Activated B cell treated with CpG ODN at 0.5 μM for 24 hours (primary cell): ENCODE measurements at regions of chr6 and their contacts with region 1.

Region 1: GRCh38 chr6:90216072-90216977 is 80.3 kb downstream of the BACH2 start:
- DNase-seq: peak; percentile 52
- ATAC-seq: peak; percentile 80
- H3K4me3 Mint-ChIP-seq: peak overlapping the region; percentile 73
- H3K27ac Mint-ChIP-seq: no peak overlapping the region
- H3K4me1 Mint-ChIP-seq: peaks cover under 1% of the 10 kb centered on the region
- H3K27me3 Mint-ChIP-seq: no peaks in the 10 kb centered on the region
- CTCF ChIP-seq: no peak

Region 2: GRCh38 chr6:88695936-88696335 is 1520.4 kb before region 1 on chr6:
- CTCF ChIA-PET with region 1: no interaction called
- POLR2A ChIA-PET with region 1: no interaction called
- intact Hi-C with region 1: no loop called
- DNase-seq: no peak
- ATAC-seq: no peak
- H3K4me3 Mint-ChIP-seq: no peak overlapping the region
- H3K27ac Mint-ChIP-seq: no peak overlapping the region
- H3K4me1 Mint-ChIP-seq: peaks cover 10% of the 10 kb centered on the region
- H3K27me3 Mint-ChIP-seq: no peaks in the 10 kb centered on the region
- CTCF ChIP-seq: no peak

Region 3: GRCh38 chr6:89940225-89941027 is 275.9 kb before region 1 on chr6:
- CTCF ChIA-PET with region 1: interaction called, 58 read pairs
- POLR2A ChIA-PET with region 1: interaction called, 10 read pairs
- intact Hi-C with region 1: loop called (anchors 1 kb)
- DNase-seq: no peak
- ATAC-seq: peak; percentile 89
- H3K4me3 Mint-ChIP-seq: no peak overlapping the region
- H3K27ac Mint-ChIP-seq: peak overlapping the region; percentile 59
- H3K4me1 Mint-ChIP-seq: peaks cover 13% of the 10 kb centered on the region
- H3K27me3 Mint-ChIP-seq: no peaks in the 10 kb centered on the region
- CTCF ChIP-seq: peak; percentile 58

Region 4: GRCh38 chr6:90021711-90022110 is 194.6 kb before region 1 on chr6:
- CTCF ChIA-PET with region 1: no interaction called
- POLR2A ChIA-PET with region 1: no interaction called
- intact Hi-C with region 1: no loop called
- DNase-seq: no peak
- ATAC-seq: no peak
- H3K4me3 Mint-ChIP-seq: no peak overlapping the region
- H3K27ac Mint-ChIP-seq: no peak overlapping the region
- H3K4me1 Mint-ChIP-seq: peaks cover 54% of the 10 kb centered on the region
- H3K27me3 Mint-ChIP-seq: no peaks in the 10 kb centered on the region
- CTCF ChIP-seq: no peak

Region 5: GRCh38 chr6:90103056-90103800 is 113.1 kb before region 1 on chr6:
- CTCF ChIA-PET with region 1: interaction called, 4 read pairs
- POLR2A ChIA-PET with region 1: interaction called, 4 read pairs
- intact Hi-C with region 1: loop called (anchors 1 kb)
- DNase-seq: no peak
- ATAC-seq: peak; percentile 47
- H3K4me3 Mint-ChIP-seq: peak overlapping the region; percentile 78
- H3K27ac Mint-ChIP-seq: peak overlapping the region; percentile 74
- H3K4me1 Mint-ChIP-seq: peaks cover 97% of the 10 kb centered on the region
- H3K27me3 Mint-ChIP-seq: no peaks in the 10 kb centered on the region
- CTCF ChIP-seq: no peak

Region 6: DNA sequence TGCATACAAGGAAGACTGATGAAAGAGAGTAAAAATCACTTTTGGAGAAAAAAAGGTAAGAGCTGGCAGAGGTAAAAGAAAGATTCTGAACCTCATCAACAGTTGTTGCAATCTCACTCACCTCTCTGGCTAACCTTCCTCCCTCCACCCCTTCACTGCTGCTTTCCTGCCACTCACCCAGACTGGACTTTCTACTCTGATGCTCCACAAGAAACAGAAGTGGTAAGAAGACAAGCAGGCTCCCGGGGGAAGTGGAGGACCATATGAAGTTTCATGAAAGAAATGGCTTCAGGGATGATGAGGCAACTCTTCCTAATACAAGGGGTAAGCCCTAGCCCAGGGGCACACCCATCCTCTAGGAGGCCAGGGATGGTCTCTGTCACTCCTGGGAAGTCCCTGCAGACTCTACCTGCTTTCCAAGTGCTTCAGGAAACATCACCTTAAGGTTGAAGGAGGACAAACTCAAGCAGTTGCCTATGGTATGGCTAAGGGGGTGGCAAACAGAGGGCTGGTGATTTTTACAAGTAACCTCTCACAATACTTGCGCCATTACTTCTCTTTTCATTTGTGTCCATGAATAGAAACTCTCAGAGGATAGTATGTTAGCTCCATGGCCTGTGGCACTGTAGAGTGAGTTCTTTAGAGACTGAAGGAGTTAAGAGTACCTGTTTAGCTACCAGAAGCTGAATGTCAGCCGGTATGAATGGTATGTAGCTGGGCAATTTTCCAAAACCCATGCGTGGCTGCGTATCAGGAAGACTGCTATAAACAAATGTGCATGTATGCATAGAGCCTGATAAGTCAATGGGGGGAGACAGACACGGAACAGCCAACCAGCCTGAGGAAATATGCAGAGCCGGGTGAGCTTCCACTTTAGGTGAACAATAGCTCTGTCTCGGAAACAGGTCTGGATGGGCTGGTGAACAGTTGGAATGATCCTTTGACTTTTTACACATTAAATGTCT is 31.7 kb before region 1 on chr6:
- CTCF ChIA-PET with region 1: interaction called, 38 read pairs
- POLR2A ChIA-PET with region 1: interaction called, 32 read pairs
- intact Hi-C with region 1: loop called (anchors 1 kb)
- DNase-seq: no peak
- ATAC-seq: peak; percentile 26
- H3K4me3 Mint-ChIP-seq: peak overlapping the region; percentile 69
- H3K27ac Mint-ChIP-seq: peak overlapping the region; percentile 89
- H3K4me1 Mint-ChIP-seq: peaks cover 70% of the 10 kb centered on the region
- H3K27me3 Mint-ChIP-seq: no peaks in the 10 kb centered on the region
- CTCF ChIP-seq: no peak

Region 7: DNA sequence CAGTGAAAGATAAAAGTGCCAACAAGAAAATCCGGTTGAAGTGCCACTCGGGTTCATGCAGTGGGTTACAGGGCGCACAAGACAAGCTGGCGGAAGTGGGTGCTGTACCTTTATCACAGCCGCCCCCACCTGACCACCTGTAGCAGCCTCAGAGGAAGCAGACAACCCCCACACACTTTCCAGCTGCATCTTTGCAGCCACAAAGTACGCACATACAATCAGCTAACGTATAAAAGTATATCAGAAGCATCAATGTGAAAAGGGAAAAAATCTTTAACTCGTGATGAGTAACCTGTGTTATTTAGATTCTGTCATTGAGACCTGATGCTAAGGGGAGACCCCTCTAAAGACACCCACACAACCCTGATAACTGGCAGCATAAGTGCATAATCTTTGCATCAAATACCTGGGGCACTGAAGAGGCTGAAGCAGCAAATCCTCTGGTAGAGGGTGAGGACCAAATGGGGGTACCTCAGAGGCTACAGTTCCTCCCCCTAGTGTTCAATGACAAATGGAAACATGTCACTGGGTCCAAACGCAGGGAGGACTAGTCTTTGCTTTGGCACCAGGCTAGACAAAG is 58.2 kb after region 1 on chr6:
- CTCF ChIA-PET with region 1: interaction called, 11 read pairs
- POLR2A ChIA-PET with region 1: interaction called, 17 read pairs
- intact Hi-C with region 1: loop called (anchors 1 kb)
- DNase-seq: peak; percentile 43
- ATAC-seq: peak; percentile 84
- H3K4me3 Mint-ChIP-seq: peak overlapping the region; percentile 64
- H3K27ac Mint-ChIP-seq: peak overlapping the region; percentile 85
- H3K4me1 Mint-ChIP-seq: peaks cover 93% of the 10 kb centered on the region
- H3K27me3 Mint-ChIP-seq: no peaks in the 10 kb centered on the region
- CTCF ChIP-seq: no peak

Region 8: GRCh38 chr6:90393232-90393884 is 177.0 kb after region 1 on chr6:
- CTCF ChIA-PET with region 1: interaction called, 20 read pairs
- POLR2A ChIA-PET with region 1: no interaction called
- intact Hi-C with region 1: loop called (anchors 1 kb)
- DNase-seq: peak; percentile 47
- ATAC-seq: peak; percentile 53
- H3K4me3 Mint-ChIP-seq: peak overlapping the region; percentile 28
- H3K27ac Mint-ChIP-seq: peak overlapping the region; percentile 59
- H3K4me1 Mint-ChIP-seq: peaks cover 45% of the 10 kb centered on the region
- H3K27me3 Mint-ChIP-seq: no peaks in the 10 kb centered on the region
- CTCF ChIP-seq: peak; percentile 67